Left lung (tissue), 14 donors: ENCODE measurements at regions of chr2 and their contacts with region 1.

Region 1: DNA sequence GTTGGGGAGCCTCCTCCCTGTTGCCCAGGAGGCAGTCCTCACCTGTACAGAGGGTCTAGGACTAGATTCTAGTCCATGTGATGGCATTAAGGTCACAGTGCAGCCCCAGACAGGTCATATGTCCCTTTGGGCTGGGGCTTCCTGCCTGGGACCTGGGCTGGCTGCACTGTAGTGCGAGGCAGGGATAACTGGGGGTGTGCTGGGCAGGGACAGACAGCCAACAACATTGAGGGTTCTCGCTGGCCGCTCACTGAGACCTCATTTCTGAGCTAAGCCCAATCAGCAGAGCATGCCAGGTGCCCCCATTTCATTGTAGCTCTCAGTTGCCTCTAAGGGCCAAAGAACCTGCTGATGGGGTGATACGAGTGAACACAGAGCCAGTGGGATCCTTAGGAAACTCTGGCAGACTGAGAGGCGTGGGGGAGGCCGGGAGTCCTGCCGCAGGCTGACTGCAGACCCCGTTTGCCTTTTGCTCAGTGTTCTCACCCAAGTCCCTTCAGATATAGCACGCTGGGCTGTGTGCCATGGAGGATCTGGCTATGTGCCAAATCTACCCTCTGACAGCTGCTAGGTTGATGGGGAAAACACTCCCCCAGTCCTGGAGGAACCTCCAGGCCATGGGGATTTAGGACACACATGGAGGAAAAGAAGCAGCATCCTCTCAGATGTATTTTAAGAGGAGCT is 51.9 kb downstream of the DYSF start:
- DNase-seq: peak in 2 of 4 donors; percentile 19 to 44
- ATAC-seq: no peak
- H3K4me3 ChIP-seq: no peak overlapping the region
- H3K27ac ChIP-seq: peak overlapping the region in 1 of 2 donors; percentile 15
- H3K4me1 ChIP-seq: peaks cover 0 to 27% of the 10 kb centered on the region in 2 donors
- H3K27me3 ChIP-seq: no peaks in the 10 kb centered on the region
- CTCF ChIP-seq: no peak

Region 2: GRCh38 chr2:71303849-71304248 is 201.4 kb before region 1 on chr2:
- intact Hi-C with region 1: loop called in 1 of 2 experiments (anchors 5 kb)
- DNase-seq: no peak
- ATAC-seq: no peak
- H3K4me3 ChIP-seq: no peak overlapping the region
- H3K27ac ChIP-seq: no peak overlapping the region
- H3K4me1 ChIP-seq: no peaks in the 10 kb centered on the region
- H3K27me3 ChIP-seq: no peaks in the 10 kb centered on the region
- CTCF ChIP-seq: no peak